ENCODE measurements at regions of chr11 and their contacts with region 1.

Region 1: DNA sequence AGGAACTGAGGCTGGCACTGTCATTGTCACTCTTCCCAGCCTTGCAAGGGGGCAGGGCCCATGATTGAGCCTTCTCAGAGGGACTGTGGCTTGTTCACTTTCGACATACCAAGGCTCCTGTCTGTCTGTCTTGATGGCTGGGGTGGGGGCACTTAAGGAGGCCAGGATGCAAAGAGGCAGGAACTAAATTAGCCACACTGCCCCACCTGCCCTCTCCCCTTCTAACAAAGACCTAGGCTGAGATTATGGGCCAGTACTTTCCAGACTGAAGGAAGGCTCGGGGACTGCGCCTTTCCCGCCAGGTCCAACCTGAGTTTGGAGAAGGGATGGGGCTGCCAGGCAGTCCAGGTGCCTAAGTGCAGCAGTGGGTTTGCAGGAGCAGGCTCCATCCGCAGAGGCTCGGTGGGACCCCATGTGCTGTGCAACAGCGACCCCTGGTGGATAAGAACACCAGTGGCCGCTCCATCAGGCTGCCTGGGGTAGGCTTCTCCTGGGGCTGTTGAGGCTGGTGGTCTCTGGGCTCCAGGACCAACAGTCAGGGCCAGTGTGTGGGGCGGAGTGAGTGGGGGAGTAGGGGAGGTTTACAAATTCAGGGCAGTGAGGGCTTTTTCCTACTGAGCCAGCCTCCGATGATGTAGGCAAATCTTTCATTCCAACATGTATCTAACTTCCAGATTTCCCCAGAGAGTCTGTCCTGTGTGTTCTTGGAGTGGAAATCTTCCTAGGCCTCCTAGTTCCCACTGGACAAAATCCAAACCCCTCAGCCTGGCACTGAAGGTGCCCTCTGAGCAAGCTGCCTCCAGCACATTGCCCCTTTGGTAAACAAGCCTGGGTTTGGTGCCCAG is 93.9 kb downstream of the INSC start:
- DNase-seq: no peak
- H3K4me3 ChIP-seq: no peak overlapping the region
- H3K27ac ChIP-seq: no peak overlapping the region
- H3K4me1 ChIP-seq: peaks cover 0 to 5% (median 0%) of the 10 kb centered on the region in 4 donors
- H3K27me3 ChIP-seq: no peaks in the 10 kb centered on the region
- CTCF ChIP-seq: peak; percentile 78 to 93 (median 90)
- EP300 ChIP-seq: no peak
- POLR2A ChIP-seq: no peak

Region 2: DNA sequence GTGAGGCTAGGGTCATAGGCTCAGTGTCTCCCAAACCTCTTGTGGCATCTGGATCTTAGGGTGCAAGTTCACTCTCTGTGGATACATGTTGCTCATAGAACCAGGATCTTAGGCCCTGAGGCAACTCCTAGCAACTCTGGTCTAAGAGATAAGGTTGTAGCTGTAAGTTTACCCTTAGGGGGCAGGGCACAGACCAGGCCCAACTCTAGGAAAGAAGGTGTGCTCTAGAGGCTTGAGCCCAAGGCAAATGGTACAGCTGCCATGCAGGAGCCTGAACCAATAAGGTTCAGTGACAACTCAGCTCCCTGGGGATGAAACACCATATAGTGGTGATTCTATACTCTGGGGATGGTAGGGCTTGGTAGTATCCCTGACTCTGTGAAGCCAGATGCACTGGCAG is 117.4 kb before region 1 on chr11:
- intact Hi-C with region 1: no loop called
- DNase-seq: peak; percentile 75
- H3K4me3 ChIP-seq: no peak overlapping the region
- H3K27ac ChIP-seq: no peak overlapping the region
- H3K4me1 ChIP-seq: no peaks in the 10 kb centered on the region
- H3K27me3 ChIP-seq: no peaks in the 10 kb centered on the region
- CTCF ChIP-seq: no peak
- EP300 ChIP-seq: no peak
- POLR2A ChIP-seq: no peak

Region 3: GRCh38 chr11:15101072-15101709 is 107.4 kb before region 1 on chr11:
- intact Hi-C with region 1: loop called (anchors 1 kb)
- DNase-seq: peak; percentile 86
- H3K4me3 ChIP-seq: no peak overlapping the region
- H3K27ac ChIP-seq: no peak overlapping the region
- H3K4me1 ChIP-seq: no peaks in the 10 kb centered on the region
- H3K27me3 ChIP-seq: no peaks in the 10 kb centered on the region
- CTCF ChIP-seq: peak; percentile 85 to 92 (median 87)
- EP300 ChIP-seq: no peak
- POLR2A ChIP-seq: no peak